ENCODE measurements at regions of chr7 and their contacts with region 1.

Region 1: GRCh38 chr7:129271500-129272355 is 46.9 kb downstream of the AHCYL2 start:
- DNase-seq: peak; percentile 83 to 91 (median 88)
- H3K4me3 ChIP-seq: peak overlapping the region in 1 of 7 experiments; percentile 47
- H3K27ac ChIP-seq: no peak overlapping the region
- H3K4me1 ChIP-seq: peaks cover 10 to 14% (median 13%) of the 10 kb centered on the region in 4 experiments
- H3K27me3 ChIP-seq: no peaks in the 10 kb centered on the region

Region 2: GRCh38 chr7:129224251-129225205 is 47.2 kb before region 1 on chr7 and contains the start of gene AHCYL2:
- CTCF ChIA-PET with region 1: interaction called, 157 read pairs
- POLR2A ChIA-PET with region 1: interaction called, 5 read pairs
- DNase-seq: peak; percentile 97 to 99 (median 98)
- H3K4me3 ChIP-seq: peak within 1 kb of the TSS; percentile 79 to 89 (median 87)
- H3K27ac ChIP-seq: peak within 1 kb of the TSS; percentile 85 to 93
- H3K4me1 ChIP-seq: peaks cover 17 to 27% (median 25%) of the 10 kb centered on the region in 4 experiments
- H3K27me3 ChIP-seq: no peaks in the 10 kb centered on the region

Region 3: GRCh38 chr7:129258649-129259389 is 12.9 kb before region 1 on chr7:
- CTCF ChIA-PET with region 1: interaction called, 18 read pairs
- POLR2A ChIA-PET with region 1: no interaction called
- DNase-seq: peak in 1 of 3 donors; percentile 29
- H3K4me3 ChIP-seq: no peak overlapping the region
- H3K27ac ChIP-seq: no peak overlapping the region
- H3K4me1 ChIP-seq: peaks cover 7 to 24% (median 20%) of the 10 kb centered on the region in 4 experiments
- H3K27me3 ChIP-seq: no peaks in the 10 kb centered on the region

Region 4: DNA sequence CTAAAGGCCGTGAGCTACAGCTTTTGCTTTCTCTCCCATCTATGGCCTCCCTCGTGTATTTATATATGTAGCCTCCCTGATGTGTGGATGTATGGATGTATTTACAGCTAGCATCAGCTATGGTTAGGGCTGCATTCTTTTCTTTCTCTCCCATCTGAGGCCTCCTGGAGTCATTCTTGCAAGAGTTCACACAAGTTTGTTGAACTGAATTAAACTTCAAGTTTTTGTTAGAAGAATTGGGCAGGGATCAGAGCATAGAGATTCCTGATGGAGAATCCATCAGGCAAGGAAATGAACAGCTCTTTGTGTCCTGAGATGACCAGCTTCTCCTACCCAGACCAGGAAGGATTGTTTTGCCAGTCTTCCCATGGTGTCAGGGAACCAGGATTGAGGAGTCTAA is 13.4 kb after region 1 on chr7:
- CTCF ChIA-PET with region 1: interaction called, 14 read pairs
- POLR2A ChIA-PET with region 1: no interaction called
- DNase-seq: no peak
- H3K4me3 ChIP-seq: no peak overlapping the region
- H3K27ac ChIP-seq: no peak overlapping the region
- H3K4me1 ChIP-seq: peaks cover 0 to 6% (median 0%) of the 10 kb centered on the region in 4 experiments
- H3K27me3 ChIP-seq: no peaks in the 10 kb centered on the region

Region 5: DNA sequence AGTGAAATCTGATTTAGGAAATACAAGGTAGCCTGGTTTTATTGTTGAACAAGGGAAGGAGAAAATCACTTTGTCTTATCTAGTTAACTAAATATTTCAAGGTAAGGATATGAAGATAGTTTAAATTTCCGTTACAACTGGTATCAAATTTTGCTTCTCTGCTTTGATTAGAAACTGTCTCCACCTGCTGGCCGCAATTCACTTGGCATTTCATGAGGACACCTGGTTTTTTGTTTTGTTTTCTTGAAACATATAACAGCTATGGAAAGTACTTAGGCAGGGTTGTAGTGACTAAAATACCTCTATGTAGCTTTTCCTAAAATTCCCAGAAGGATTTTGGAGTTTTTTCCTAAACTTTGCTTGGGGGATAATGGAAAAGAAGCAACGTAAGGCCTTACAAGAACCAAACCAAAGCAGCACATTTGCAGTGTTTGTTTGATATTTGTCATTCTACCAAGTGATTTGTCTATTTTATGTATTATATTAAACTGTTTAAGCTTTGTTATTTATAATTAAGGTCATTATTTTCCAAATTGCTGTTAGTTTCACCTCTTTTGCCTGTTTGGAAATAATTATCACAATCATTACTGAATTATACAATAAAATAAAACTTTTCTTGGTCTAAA is 26.7 kb after region 1 on chr7:
- CTCF ChIA-PET with region 1: interaction called, 14 read pairs
- POLR2A ChIA-PET with region 1: no interaction called
- DNase-seq: peak; percentile 46 to 67 (median 60)
- H3K4me3 ChIP-seq: no peak overlapping the region
- H3K27ac ChIP-seq: no peak overlapping the region
- H3K4me1 ChIP-seq: no peaks in the 10 kb centered on the region
- H3K27me3 ChIP-seq: no peaks in the 10 kb centered on the region